Activated T-helper 1 cell treated with anti-CD3 and anti-CD28 coated beads, Interleukin-12 subunit alpha, Interleukin-12 subunit beta, Interleukin-2, Interleukin-4 antibody, amounts not matched to agents 30 ng/mL and 10 ng/mL and 1 ng/mL, durations not matched to agents 14 hours and 24 hours and 36 hours (primary cell): ENCODE measurements at regions of chr2 and their contacts with region 1.

Region 1: DNA sequence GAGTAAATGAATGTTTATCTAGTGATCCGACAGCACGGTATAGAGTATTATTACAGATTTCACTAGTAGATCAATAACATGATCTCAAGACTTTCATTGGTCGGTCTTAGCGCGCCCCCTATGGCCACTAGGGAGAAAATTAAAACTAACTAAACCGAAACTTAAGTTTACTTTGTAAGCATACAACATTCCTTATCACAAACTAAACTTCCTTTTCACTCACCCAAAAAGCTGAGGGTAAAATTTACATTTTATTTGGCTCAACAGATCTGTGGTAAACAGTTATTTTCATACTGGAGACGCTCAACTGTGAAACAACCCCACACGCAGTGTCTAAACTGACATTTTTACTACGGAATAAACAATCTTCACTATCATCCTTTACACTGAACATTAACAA is 215.6 kb upstream of the MAP2 start:
- DNase-seq: no peak
- H3K4me3 Mint-ChIP-seq: peak overlapping the region; percentile 48
- H3K27ac Mint-ChIP-seq: no peak overlapping the region
- H3K4me1 Mint-ChIP-seq: no peaks in the 10 kb centered on the region
- H3K27me3 Mint-ChIP-seq: no peaks in the 10 kb centered on the region

Region 2: GRCh38 chr2:208392300-208393080 is 815.7 kb before region 1 on chr2:
- intact Hi-C with region 1: loop called (anchors 2 kb)
- DNase-seq: no peak
- H3K4me3 Mint-ChIP-seq: no peak overlapping the region
- H3K27ac Mint-ChIP-seq: no peak overlapping the region
- H3K4me1 Mint-ChIP-seq: peaks cover 5% of the 10 kb centered on the region
- H3K27me3 Mint-ChIP-seq: peaks cover 10% of the 10 kb centered on the region

Region 3: DNA sequence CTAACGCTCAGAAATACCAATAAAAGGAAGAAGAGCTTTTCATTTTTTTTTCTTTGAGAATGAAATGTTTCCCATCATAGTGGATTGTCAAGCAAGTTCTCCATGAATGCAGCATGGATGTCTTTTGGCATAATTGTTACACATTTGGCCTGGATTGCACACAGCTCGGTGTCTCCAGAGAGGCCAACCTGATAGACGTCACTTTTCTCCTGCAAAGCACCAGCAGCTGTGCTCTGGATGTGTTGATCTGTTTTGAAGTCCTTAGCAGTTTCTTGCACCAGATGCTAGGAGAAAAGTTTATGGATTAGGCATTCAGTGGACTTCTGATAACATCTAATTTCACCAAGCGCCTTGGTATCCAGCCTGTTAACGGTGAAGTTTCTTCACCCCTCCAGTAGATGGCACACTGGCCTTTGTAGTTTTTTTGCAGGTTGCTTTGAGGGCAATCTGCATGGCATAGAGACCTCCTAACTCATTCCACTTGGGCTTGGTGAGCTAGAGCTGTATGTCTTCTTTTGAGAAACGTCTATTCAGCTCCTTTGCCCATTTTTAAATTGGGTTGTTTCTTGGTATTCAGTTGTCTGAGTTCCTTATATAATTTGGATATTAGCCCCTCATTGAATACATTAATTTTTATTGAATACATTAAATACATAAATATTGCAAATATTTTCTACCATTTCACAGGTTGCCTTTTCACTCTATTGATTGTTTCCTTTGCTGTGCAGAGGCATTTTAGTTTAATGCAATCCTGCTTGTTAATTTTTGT is 741.9 kb before region 1 on chr2:
- intact Hi-C with region 1: loop called (anchors 1 kb)
- DNase-seq: no peak
- H3K4me3 Mint-ChIP-seq: no peak overlapping the region
- H3K27ac Mint-ChIP-seq: no peak overlapping the region
- H3K4me1 Mint-ChIP-seq: no peaks in the 10 kb centered on the region
- H3K27me3 Mint-ChIP-seq: no peaks in the 10 kb centered on the region

Region 4: DNA sequence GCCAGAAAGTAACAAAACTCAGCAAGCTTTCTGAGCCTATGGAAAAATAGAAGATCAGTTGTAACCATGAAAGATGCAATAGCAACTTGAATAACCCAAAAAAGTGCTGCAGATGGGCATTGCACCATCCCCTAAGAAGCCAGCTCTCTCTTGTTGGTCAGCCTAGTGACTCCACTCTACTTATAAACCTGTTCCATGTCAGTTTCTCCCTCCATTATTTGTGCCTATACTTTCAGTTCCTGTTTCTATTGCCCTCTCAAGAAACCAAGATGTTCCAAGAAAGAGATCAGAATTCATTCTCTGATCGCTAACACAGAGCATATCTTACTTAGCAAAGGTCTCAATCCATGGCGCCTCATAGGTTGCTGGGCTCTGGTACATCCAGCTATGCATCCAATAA is 45.3 kb after region 1 on chr2:
- intact Hi-C with region 1: no loop called
- DNase-seq: no peak
- H3K4me3 Mint-ChIP-seq: no peak overlapping the region
- H3K27ac Mint-ChIP-seq: no peak overlapping the region
- H3K4me1 Mint-ChIP-seq: no peaks in the 10 kb centered on the region
- H3K27me3 Mint-ChIP-seq: no peaks in the 10 kb centered on the region

Region 5: GRCh38 chr2:209351636-209352035 is 143.4 kb after region 1 on chr2:
- intact Hi-C with region 1: no loop called
- DNase-seq: no peak
- H3K4me3 Mint-ChIP-seq: no peak overlapping the region
- H3K27ac Mint-ChIP-seq: no peak overlapping the region
- H3K4me1 Mint-ChIP-seq: no peaks in the 10 kb centered on the region
- H3K27me3 Mint-ChIP-seq: no peaks in the 10 kb centered on the region